ENCODE measurements at regions of chr18 and their contacts with region 1.

Region 1: GRCh38 chr18:74196220-74197119 is 48.1 kb downstream of the TIMM21 start:
- DNase-seq: peak; percentile 15
- H3K4me3 ChIP-seq: peak overlapping the region; percentile 43
- H3K27ac ChIP-seq: no peak overlapping the region
- H3K27me3 ChIP-seq: peaks cover 3% of the 10 kb centered on the region
- CTCF ChIP-seq: peak; percentile 86

Region 2: GRCh38 chr18:73975266-73975665 is 221.2 kb before region 1 on chr18:
- CTCF ChIA-PET with region 1: no interaction called
- POLR2A ChIA-PET with region 1: no interaction called
- DNase-seq: no peak
- H3K4me3 ChIP-seq: no peak overlapping the region
- H3K27ac ChIP-seq: no peak overlapping the region
- H3K27me3 ChIP-seq: no peaks in the 10 kb centered on the region
- CTCF ChIP-seq: no peak

Region 3: DNA sequence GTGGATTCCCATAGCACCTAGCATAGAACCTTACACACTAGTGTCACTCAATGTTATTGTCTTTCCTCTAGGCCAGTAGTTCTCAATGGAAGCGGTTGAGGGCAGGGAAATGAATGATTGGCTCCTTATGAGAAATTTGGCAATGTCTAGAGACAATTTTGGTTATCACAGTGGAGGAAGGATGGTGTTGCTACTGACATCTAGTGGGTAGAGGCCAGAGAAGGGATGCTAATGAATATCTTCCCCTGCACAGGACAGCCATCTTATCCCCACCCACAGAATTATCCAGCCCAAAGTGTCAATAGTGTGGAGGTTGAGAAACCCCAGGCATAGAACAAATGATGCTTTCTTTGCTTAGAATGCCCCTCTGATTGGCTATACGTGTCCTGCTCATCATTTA is 134.9 kb after region 1 on chr18:
- CTCF ChIA-PET with region 1: interaction called, 21 read pairs
- POLR2A ChIA-PET with region 1: no interaction called
- DNase-seq: peak; percentile 13
- H3K4me3 ChIP-seq: no peak overlapping the region
- H3K27ac ChIP-seq: no peak overlapping the region
- H3K27me3 ChIP-seq: no peaks in the 10 kb centered on the region
- CTCF ChIP-seq: peak; percentile 63

Region 4: DNA sequence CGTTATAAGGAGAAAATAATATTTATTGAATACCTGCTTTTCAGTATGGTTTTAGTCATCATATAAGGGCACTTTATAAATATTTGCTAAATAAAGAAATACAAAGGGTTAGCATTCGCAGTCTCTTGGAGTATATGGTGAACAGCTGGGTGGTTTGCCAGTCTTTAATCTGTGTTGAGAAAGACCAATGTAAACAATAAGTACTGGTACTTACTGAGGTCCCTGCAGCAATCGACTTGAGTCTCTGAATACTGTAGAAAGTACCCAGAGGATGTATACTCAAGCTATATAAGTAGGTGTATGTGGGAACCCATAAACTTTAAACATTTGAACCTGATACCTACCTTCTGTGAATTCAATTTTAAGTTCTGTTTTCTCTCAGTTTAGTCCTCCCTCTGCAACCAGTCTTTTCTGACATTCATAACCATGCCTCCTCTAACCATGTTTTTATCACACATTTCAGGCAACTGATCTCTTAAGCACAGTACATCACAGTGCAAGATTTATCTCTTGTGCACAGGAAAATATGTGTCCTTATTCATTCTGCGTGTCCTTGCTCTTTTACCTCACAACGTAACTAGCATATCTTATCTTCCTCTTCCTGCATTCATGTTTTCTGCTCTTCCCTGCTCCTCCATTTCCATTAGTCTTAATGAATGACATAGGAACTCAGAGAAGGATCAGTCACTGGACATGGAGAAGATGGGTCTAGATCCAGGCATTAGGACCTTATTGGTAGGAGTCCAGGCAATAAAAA is 140.9 kb after region 1 on chr18:
- CTCF ChIA-PET with region 1: interaction called, 60 read pairs
- POLR2A ChIA-PET with region 1: no interaction called
- DNase-seq: no peak
- H3K4me3 ChIP-seq: no peak overlapping the region
- H3K27ac ChIP-seq: no peak overlapping the region
- H3K27me3 ChIP-seq: no peaks in the 10 kb centered on the region
- CTCF ChIP-seq: no peak